Activated T-helper 2 cell treated with anti-CD3 and anti-CD28 coated beads, Interferon-gamma antibody, Interleukin-2, Interleukin-4, amounts not matched to agents 10 μg/mL and 5 μg/mL and 100 μg/mL, durations not matched to agents 14 hours and 24 hours and 36 hours (primary cell): ENCODE measurements at regions of chr7 and their contacts with region 1.

Region 1: GRCh38 chr7:134954197-134955082 is 31.9 kb upstream of the AGBL3 start:
- DNase-seq: no peak
- H3K4me3 Mint-ChIP-seq: no peak overlapping the region
- H3K27ac Mint-ChIP-seq: no peak overlapping the region
- H3K4me1 Mint-ChIP-seq: peaks cover 4% of the 10 kb centered on the region
- H3K27me3 Mint-ChIP-seq: no peaks in the 10 kb centered on the region

Region 2: DNA sequence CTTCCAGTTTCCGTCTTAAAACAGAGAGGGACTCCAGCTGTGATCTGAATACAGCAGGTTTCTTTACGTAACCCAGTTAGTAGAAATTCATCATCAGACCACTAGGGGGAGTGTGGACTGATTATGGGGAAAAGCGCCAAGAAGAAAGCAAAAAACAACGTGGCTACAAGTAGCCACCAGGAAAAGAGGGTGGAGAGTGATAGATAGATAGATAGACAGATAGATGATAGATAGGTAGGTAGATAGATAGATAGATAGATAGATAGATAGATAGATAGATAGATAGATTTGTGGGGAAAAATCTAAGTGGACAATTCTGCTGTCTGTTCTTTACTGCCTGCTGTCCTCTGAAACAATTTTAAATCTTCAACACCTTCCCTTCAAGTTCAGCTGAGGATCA is 439.8 kb before region 1 on chr7:
- intact Hi-C with region 1: loop called (anchors 10 kb)
- DNase-seq: no peak
- H3K4me3 Mint-ChIP-seq: no peak overlapping the region
- H3K27ac Mint-ChIP-seq: no peak overlapping the region
- H3K4me1 Mint-ChIP-seq: peaks cover 7% of the 10 kb centered on the region
- H3K27me3 Mint-ChIP-seq: peaks cover 8% of the 10 kb centered on the region

Region 3: DNA sequence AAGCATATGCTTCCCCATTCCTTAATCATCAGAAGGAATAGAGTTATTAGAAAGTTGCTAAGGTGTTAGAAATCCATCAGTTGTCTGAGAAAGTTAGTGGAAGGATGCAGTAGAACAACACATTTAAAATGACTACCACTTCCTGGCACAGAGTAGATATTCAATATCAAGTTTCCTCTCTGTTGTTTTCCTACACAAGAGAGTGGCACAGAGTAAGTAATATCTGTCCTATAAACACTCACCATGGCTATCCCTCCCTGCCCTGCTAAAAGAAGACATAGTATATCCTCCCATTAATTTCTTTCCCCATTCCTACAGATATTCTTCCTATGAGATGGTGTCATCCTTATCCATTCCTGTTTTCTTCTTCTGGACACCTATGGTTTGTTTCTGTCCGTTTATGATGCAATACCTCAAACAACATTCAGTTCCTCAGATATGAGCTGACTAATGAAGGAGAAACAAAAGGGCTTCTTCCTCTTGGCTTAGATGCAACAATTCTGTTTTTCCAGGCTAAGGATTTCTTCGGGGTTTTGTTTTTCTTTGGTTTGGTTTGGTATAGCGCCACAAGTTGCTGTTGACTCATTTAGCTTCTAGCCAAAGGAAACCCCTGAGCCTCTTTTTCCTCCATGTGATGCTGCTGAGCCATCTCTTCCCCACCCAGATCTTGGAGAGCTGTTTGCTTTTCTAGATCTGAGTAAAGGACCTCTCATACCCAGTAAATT is 340.7 kb before region 1 on chr7:
- intact Hi-C with region 1: no loop called
- DNase-seq: no peak
- H3K4me3 Mint-ChIP-seq: no peak overlapping the region
- H3K27ac Mint-ChIP-seq: peak overlapping the region; percentile 74
- H3K4me1 Mint-ChIP-seq: peaks cover 14% of the 10 kb centered on the region
- H3K27me3 Mint-ChIP-seq: peaks cover 25% of the 10 kb centered on the region

Region 4: GRCh38 chr7:134632937-134633540 is 321.4 kb before region 1 on chr7:
- intact Hi-C with region 1: loop called (anchors 1 kb)
- DNase-seq: no peak
- H3K4me3 Mint-ChIP-seq: no peak overlapping the region
- H3K27ac Mint-ChIP-seq: no peak overlapping the region
- H3K4me1 Mint-ChIP-seq: peaks cover 25% of the 10 kb centered on the region
- H3K27me3 Mint-ChIP-seq: peaks cover 8% of the 10 kb centered on the region

Region 5: DNA sequence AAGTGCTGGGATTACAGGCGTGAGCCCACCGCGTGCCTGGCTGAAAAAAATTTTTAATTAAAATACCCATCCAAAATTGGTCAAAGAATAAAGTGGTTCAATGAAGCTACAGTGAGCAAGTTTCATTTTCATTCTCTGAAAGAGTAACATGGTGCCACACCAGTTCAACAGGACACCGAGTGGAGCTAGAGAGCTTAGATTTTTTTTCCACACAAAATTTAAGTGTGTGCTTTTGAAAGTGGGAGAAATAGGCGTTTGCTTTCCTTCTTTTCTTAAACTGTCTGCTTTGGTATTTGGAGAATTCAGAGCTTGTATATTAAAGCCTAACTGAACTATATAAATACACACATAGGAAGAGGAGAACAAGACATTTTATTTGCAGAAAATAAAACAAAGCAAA is 264.4 kb before region 1 on chr7:
- intact Hi-C with region 1: loop called (anchors 2 kb)
- DNase-seq: no peak
- H3K4me3 Mint-ChIP-seq: no peak overlapping the region
- H3K27ac Mint-ChIP-seq: peak overlapping the region; percentile 36
- H3K4me1 Mint-ChIP-seq: peaks cover 25% of the 10 kb centered on the region
- H3K27me3 Mint-ChIP-seq: no peaks in the 10 kb centered on the region